Dorsolateral prefrontal cortex (tissue), 120 donors: ENCODE measurements at regions of chr19 and their contacts with region 1.

Region 1: DNA sequence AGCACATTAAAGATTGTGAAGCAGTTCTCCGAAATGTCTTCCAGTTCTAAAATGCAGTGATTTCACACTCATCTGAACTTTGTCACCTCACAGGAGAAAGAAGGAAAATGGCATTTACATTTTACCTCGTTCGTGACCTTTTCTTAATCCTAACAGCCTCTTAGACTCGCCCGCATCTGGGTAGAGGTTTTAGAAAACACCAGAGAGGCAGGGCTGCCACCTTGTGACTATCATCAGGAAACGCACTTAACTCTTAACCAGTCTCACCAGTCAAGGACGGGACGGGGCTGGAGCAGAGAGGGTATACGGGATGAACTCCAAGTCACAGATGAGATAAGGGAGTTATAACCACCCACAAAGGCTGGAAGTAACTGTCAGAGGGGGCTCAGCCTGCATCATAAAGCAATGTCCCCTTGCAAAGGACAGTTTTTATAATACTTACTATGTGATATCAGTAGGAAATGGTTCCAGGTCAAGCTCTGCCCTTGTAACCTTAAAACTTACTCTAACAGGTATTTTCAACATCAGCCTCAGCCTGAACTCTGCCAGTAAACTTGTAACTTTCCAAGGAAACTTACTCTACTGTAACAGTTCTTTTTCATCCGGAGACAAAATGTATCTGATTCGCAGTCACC is 8.6 kb upstream of the CEACAM6 start:
- DNase-seq: peak in 3 of 10 donors; percentile 9 to 41 (median 29)
- H3K4me3 ChIP-seq: no peak overlapping the region
- H3K27ac ChIP-seq: no peak overlapping the region
- H3K27me3 ChIP-seq: peaks cover 0 to 52% (median 13%) of the 10 kb centered on the region in 45 donors
- CTCF ChIP-seq: peak in 47 of 56 donors; percentile 10 to 67 (median 44)

Region 2: DNA sequence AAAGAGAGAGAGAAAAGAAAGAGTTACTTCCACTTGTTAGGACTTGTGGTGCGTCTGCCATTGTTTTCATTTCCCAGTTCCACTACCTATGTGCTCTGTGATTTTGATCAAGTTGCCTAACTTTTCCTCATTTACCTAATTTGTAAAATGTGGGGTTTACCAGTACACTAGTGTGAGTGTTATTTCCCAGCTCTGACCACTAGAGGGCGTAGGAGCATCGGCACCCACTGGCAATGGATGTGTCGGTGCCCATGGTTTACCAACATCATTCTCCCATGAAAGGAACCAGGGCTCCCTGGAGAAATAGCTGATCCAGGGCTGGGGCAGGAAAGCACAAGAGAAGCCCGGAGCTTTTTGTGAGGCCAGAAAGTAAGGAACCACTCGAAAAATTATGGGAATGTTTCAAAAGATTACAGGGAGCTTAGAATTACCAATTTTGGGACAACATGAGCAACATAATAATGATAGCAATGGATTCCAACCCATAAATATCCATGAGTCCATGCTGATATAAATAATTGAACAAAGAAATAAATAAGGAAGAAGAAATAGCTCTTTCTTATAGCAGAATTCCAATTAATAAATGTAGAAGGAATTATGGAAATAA is 104.7 kb before region 1 on chr19:
- intact Hi-C with region 1: loop called in 1 of 2 experiments (anchors 5 kb)
- DNase-seq: peak in 8 of 10 donors; percentile 27 to 78 (median 59)
- H3K4me3 ChIP-seq: no peak overlapping the region
- H3K27ac ChIP-seq: no peak overlapping the region
- H3K27me3 ChIP-seq: peaks cover 0 to 48% (median 28%) of the 10 kb centered on the region in 45 donors
- CTCF ChIP-seq: peak; percentile 63 to 91 (median 80)